ENCODE measurements at regions of chr2 and their contacts with region 1.

Region 1: DNA sequence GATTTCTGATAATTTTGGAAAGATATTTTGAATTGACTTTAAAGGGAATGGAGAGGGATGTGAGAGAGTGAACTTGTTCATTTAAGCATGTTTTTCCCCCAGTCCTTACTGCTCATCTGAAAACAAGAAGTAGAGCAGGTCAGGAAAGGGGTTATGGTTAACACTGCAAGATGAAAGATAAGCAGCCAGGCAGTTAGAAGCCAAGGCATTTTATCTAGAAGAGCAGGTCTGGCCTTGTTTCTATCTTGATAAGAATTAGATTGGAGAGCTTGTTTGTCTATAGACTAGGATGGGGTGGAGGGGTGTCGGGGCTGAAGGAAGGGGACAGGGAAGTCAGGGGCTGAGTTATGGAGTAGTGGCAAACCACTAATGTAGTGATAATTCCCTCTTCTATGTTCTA is 171.6 kb downstream of the IKZF2 start:
- DNase-seq: peak in 1 of 35 experiments; percentile 19
- ATAC-seq: peak; percentile 43 to 60 (median 52)
- H3K4me3 ChIP-seq: no peak overlapping the region
- H3K4me3 Mint-ChIP-seq: no peak overlapping the region
- H3K27ac ChIP-seq: no peak overlapping the region
- H3K27ac Mint-ChIP-seq: peak overlapping the region; percentile 0 to 13
- H3K4me1 ChIP-seq: peaks cover 0 to 19% of the 10 kb centered on the region in 2 experiments
- H3K4me1 Mint-ChIP-seq: peaks cover 7 to 14% (median 9%) of the 10 kb centered on the region in 3 donors
- H3K27me3 ChIP-seq: no peaks in the 10 kb centered on the region
- H3K27me3 Mint-ChIP-seq: no peaks in the 10 kb centered on the region

Region 2: GRCh38 chr2:212968280-212968679 is 11.5 kb before region 1 on chr2:
- CTCF ChIA-PET with region 1: interaction called, 4 read pairs
- POLR2A ChIA-PET with region 1: interaction called in 1 of 2 experiments, 12 read pairs
- DNase-seq: no peak
- ATAC-seq: no peak
- H3K4me3 ChIP-seq: no peak overlapping the region
- H3K4me3 Mint-ChIP-seq: no peak overlapping the region
- H3K27ac ChIP-seq: no peak overlapping the region
- H3K27ac Mint-ChIP-seq: no peak overlapping the region
- H3K4me1 ChIP-seq: peaks cover 0 to 18% of the 10 kb centered on the region in 2 experiments
- H3K4me1 Mint-ChIP-seq: peaks cover 11 to 21% (median 11%) of the 10 kb centered on the region in 3 donors
- H3K27me3 ChIP-seq: no peaks in the 10 kb centered on the region
- H3K27me3 Mint-ChIP-seq: no peaks in the 10 kb centered on the region

Measured in T-cell (primary cell).